H1 (cell line): ENCODE measurements at regions of chr5 and their contacts with region 1.

Region 1: DNA sequence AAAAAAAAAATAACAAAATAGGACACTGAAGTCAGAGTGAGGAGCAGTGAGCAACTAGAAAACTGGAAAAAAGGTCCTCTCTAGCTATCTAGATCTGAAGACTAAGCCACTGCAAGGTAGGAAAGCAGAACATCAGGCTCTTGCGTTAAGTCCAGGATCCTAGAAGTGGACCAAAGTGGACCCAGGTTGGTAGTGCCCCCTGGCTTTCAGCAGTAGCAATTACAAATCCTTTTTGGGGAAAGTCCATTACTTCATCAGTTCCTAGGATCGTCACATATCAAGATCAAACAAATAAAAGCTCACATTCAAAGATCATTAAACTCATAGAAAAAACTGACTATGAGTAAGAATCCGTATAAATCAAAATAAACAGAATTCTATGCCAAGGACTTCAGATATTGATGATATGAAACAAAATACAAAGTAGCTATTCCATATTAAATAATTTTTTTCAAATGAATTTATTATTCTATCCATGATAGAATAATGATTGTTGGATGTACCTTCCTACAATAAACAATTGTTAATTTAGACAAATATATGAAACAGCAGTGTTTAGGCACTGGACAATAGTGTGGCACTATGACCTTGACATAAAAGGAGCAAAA is 6.5 kb upstream of the RICTOR start:
- DNase-seq: no peak
- H3K4me3 ChIP-seq: no peak overlapping the region
- H3K27ac ChIP-seq: no peak overlapping the region
- H3K4me1 ChIP-seq: no peaks in the 10 kb centered on the region
- H3K27me3 ChIP-seq: no peaks in the 10 kb centered on the region
- CTCF ChIP-seq: peak; percentile 50 to 85 (median 75)
- EP300 ChIP-seq: no peak
- POLR2A ChIP-seq: no peak
- RAD21 ChIP-seq: peak; percentile 77 to 85

Region 2: GRCh38 chr5:38892363-38892762 is 188.3 kb before region 1 on chr5:
- CTCF ChIA-PET with region 1: no interaction called
- POLR2A ChIA-PET with region 1: no interaction called
- DNase-seq: no peak
- H3K4me3 ChIP-seq: no peak overlapping the region
- H3K27ac ChIP-seq: no peak overlapping the region
- H3K4me1 ChIP-seq: peaks cover 0 to 4% (median 1%) of the 10 kb centered on the region in 4 experiments; a peak in 2 of 7 replicates
- H3K27me3 ChIP-seq: no peaks in the 10 kb centered on the region
- CTCF ChIP-seq: no peak
- EP300 ChIP-seq: no peak
- POLR2A ChIP-seq: no peak
- RAD21 ChIP-seq: no peak

Region 3: GRCh38 chr5:38948501-38948900 is 132.2 kb before region 1 on chr5:
- CTCF ChIA-PET with region 1: no interaction called
- POLR2A ChIA-PET with region 1: no interaction called
- DNase-seq: no peak
- H3K4me3 ChIP-seq: no peak overlapping the region
- H3K27ac ChIP-seq: no peak overlapping the region
- H3K4me1 ChIP-seq: no peaks in the 10 kb centered on the region
- H3K27me3 ChIP-seq: no peaks in the 10 kb centered on the region
- CTCF ChIP-seq: no peak
- EP300 ChIP-seq: no peak
- POLR2A ChIP-seq: no peak
- RAD21 ChIP-seq: no peak

Region 4: GRCh38 chr5:39005566-39006232 is 75.0 kb before region 1 on chr5:
- CTCF ChIA-PET with region 1: interaction called, 40 read pairs
- POLR2A ChIA-PET with region 1: no interaction called
- DNase-seq: no peak
- H3K4me3 ChIP-seq: no peak overlapping the region
- H3K27ac ChIP-seq: no peak overlapping the region
- H3K4me1 ChIP-seq: no peaks in the 10 kb centered on the region
- H3K27me3 ChIP-seq: no peaks in the 10 kb centered on the region
- CTCF ChIP-seq: peak in 2 of 3 experiments; percentile 28 to 44; a peak in 2 of 4 replicates
- EP300 ChIP-seq: no peak
- POLR2A ChIP-seq: no peak
- RAD21 ChIP-seq: peak; percentile 64 to 66

Region 5: GRCh38 chr5:39092581-39093350 is 12.1 kb after region 1 on chr5:
- CTCF ChIA-PET with region 1: interaction called, 21 read pairs
- POLR2A ChIA-PET with region 1: no interaction called
- DNase-seq: no peak
- H3K4me3 ChIP-seq: no peak overlapping the region
- H3K27ac ChIP-seq: no peak overlapping the region
- H3K4me1 ChIP-seq: no peaks in the 10 kb centered on the region
- H3K27me3 ChIP-seq: no peaks in the 10 kb centered on the region
- CTCF ChIP-seq: no peak
- EP300 ChIP-seq: no peak
- POLR2A ChIP-seq: no peak
- RAD21 ChIP-seq: no peak

Region 6: GRCh38 chr5:39100851-39101396 is 20.2 kb after region 1 on chr5:
- CTCF ChIA-PET with region 1: interaction called, 10 read pairs
- POLR2A ChIA-PET with region 1: interaction called, 3 read pairs
- DNase-seq: no peak
- H3K4me3 ChIP-seq: no peak overlapping the region
- H3K27ac ChIP-seq: no peak overlapping the region
- H3K4me1 ChIP-seq: no peaks in the 10 kb centered on the region
- H3K27me3 ChIP-seq: no peaks in the 10 kb centered on the region
- CTCF ChIP-seq: no peak
- EP300 ChIP-seq: no peak
- POLR2A ChIP-seq: no peak
- RAD21 ChIP-seq: no peak